K562 (cell line): ENCODE measurements at regions of chr17 and their contacts with region 1.

Region 1: DNA sequence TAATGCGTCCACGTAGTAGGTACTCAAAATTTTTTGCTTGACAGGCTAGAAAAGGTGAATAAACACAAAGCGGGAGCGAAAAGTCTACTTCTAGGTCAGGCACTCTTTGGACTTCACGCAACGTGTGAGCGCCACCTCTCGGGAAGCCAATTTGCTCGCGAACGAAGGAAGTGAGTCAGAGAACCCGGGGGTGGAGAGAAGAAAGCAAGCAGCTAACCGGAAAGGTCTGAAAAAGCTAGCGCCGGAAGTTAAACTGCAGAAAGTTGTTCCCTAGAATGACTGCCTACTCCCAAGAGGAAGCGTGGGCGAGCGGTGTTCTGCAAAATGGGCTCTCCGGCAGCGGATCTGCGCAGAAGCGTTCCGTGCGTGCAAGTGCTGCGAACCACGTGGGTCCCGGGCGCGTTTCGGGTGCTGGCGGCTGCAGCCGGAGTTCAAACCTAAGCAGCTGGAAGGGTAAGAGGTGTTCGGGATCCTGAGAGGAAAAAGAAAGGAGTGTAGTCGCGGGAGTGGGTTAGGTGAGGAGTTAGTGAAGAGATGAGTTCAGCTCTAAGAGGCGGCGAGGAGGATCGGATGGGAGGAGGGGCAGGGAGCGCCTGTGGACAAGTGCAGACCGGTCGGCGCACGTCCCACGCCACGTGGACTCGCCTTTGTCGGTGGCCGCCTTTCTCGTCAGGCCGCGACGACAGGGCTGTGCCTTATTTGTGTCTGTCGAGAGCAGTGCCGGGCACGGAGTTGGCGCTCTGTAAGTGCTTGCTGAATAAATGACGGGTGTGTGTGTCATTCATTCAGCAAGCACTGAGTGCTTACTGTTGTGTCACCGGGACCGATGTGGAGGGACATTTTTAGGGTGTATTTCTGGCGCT is at the start of gene NME1:
- DNase-seq: peak; percentile 92 to 99 (median 93)
- ATAC-seq: peak; percentile 95
- H3K4me3 ChIP-seq: peak within 1 kb of the TSS; percentile 71
- H3K27ac ChIP-seq: peak within 1 kb of the TSS; percentile 87
- H3K4me1 ChIP-seq: peaks cover 5 to 15% of the 10 kb centered on the region in 2 experiments; a peak in 4 of 5 replicates
- H3K27me3 ChIP-seq: no peaks in the 10 kb centered on the region
- CTCF ChIP-seq: peak; percentile 89 to 99 (median 96)
- EP300 ChIP-seq: peak; percentile 79
- POLR2A ChIP-seq: peak; percentile 96
- RAD21 ChIP-seq: peak; percentile 95 to 98
- polyA plus RNA-seq, gene NME1: 1,450 to 1,588 TPM

Region 2: DNA sequence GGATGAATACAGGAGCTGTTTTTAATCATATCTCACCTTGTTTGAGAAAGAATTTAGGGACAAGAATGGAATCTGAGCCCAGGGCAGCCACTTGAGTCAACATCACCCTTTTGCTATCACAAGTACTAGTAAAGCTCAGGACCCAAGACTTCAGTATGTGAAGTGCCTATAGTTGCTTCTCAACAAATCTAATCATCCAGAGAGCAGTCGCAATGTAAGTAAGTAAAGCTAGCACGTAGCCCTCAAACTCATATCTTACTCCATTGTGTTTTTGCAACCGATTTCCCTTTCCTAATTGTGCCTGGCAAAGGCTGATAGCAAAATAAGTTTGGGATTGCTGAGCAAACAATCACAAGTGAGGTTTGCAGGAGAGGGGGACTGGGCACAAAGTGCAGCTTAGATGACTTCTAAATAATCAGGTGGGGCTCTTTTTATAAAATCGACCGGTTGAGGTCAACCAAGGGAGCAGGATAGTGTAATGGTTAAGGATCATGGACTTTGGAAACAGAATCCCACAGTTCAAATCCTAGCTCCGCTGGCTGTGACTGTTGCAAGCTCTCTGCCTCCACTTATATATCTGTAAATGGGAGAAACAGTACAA is 300.3 kb before region 1 on chr17:
- CTCF ChIA-PET with region 1: no interaction called
- POLR2A ChIA-PET with region 1: no interaction called
- in situ Hi-C with region 1: no loop called
- intact Hi-C with region 1: loop called (anchors 5 kb)
- DNase-seq: no peak
- ATAC-seq: no peak
- H3K4me3 ChIP-seq: no peak overlapping the region
- H3K27ac ChIP-seq: no peak overlapping the region
- H3K4me1 ChIP-seq: peaks cover 3 to 16% of the 10 kb centered on the region in 2 experiments; a peak in 3 of 5 replicates
- H3K27me3 ChIP-seq: no peaks in the 10 kb centered on the region
- CTCF ChIP-seq: no peak
- EP300 ChIP-seq: no peak
- POLR2A ChIP-seq: no peak
- RAD21 ChIP-seq: no peak

Region 3: DNA sequence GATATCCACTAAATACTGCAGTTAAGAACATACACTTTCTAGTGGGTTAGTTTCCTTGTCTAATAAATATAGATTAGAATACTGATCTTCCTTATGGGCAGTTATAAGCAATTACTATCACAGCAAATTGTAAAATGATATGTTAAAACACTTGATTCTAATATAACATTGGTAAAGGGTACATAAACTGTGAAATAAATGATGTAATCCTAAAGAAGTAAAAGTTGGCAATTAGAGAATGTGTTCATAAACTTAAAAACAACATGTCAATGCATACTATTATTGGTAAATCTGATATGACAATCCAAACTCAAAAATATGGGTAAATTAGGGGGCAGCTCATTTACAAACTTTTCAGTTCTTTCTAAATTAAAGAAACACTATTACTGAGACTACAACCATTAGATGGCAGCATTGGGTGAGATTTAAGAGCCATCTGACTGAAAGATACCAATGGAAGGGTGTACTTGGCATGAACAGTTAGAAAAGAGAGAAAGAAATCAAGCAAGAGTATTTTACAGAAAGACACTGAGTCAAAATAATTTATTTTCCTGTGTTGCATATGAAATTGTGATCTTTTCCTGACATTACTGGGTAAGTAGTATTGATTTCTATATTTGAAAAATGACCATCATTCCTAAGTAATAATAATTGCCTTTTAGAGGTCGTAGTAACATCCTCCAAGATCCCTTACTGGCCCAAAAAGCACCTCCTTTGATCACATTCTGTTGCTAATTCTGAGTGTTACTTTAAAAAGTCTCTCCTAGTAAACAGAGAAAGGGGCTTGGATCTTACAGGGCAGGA is 152.4 kb before region 1 on chr17:
- CTCF ChIA-PET with region 1: interaction called, 31 read pairs
- POLR2A ChIA-PET with region 1: interaction called, 6 read pairs
- in situ Hi-C with region 1: loop called (anchors 5 kb)
- intact Hi-C with region 1: loop called (anchors 1 kb)
- DNase-seq: peak in 2 of 4 experiments; percentile 23 to 59
- ATAC-seq: peak; percentile 83
- H3K4me3 ChIP-seq: no peak overlapping the region
- H3K27ac ChIP-seq: no peak overlapping the region
- H3K4me1 ChIP-seq: no peaks in the 10 kb centered on the region
- H3K27me3 ChIP-seq: no peaks in the 10 kb centered on the region
- CTCF ChIP-seq: peak in 2 of 3 experiments; percentile 11 to 63; a peak in 3 of 6 replicates
- EP300 ChIP-seq: no peak
- POLR2A ChIP-seq: no peak
- RAD21 ChIP-seq: peak; percentile 72 to 78

Region 4: DNA sequence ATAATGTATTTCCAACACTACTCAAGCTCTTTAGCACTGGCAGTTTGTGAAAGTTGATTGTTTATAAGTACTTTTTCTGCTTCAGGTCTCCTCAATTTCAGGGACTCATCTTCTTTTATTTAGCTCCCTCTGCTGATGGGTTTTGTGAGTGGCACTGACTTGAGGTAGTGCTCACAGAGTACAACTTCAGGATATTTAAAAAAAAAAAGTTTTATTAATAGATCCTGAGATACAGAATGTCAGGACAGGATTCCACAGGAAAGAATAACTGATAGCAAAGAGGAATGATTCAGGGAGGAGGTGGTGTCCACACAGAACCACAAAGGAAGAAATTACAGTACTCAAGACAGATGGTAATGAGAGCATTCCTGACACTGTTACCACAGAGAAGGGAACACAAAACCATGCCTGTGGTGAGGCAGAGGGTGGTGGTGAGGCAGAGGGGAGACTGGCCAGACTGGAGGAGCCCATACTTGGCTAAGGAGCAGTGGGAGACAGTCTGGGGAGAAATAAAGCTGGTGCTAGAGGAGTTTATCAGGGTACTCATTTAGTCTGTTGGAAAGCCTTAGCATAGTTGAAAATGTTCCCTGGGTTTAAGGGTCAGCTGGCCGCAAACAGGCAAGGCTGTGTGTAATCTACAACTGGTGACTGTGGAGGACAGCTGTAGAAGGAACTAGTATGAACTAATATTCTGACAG is 96.5 kb before region 1 on chr17:
- CTCF ChIA-PET with region 1: interaction called, 3 read pairs
- POLR2A ChIA-PET with region 1: interaction called, 3 read pairs
- in situ Hi-C with region 1: no loop called
- intact Hi-C with region 1: loop called (anchors 5 kb)
- DNase-seq: peak; percentile 19 to 55 (median 29)
- ATAC-seq: peak; percentile 86
- H3K4me3 ChIP-seq: no peak overlapping the region
- H3K27ac ChIP-seq: peak overlapping the region; percentile 58; the same call in 2 of the 3 replicates
- H3K4me1 ChIP-seq: no peaks in the 10 kb centered on the region; a peak in 2 of 5 replicates
- H3K27me3 ChIP-seq: no peaks in the 10 kb centered on the region
- CTCF ChIP-seq: peak; percentile 15 to 64 (median 43); a peak in 3 of 6 replicates
- EP300 ChIP-seq: no peak
- POLR2A ChIP-seq: no peak
- RAD21 ChIP-seq: peak; percentile 29 to 49; a peak in 2 of 4 replicates

Region 5: GRCh38 chr17:51079049-51079448 is 74.4 kb before region 1 on chr17:
- CTCF ChIA-PET with region 1: no interaction called
- POLR2A ChIA-PET with region 1: no interaction called
- in situ Hi-C with region 1: no loop called
- intact Hi-C with region 1: no loop called
- DNase-seq: no peak
- ATAC-seq: no peak
- H3K4me3 ChIP-seq: no peak overlapping the region
- H3K27ac ChIP-seq: no peak overlapping the region
- H3K4me1 ChIP-seq: no peaks in the 10 kb centered on the region
- H3K27me3 ChIP-seq: no peaks in the 10 kb centered on the region
- CTCF ChIP-seq: no peak
- EP300 ChIP-seq: no peak
- POLR2A ChIP-seq: no peak
- RAD21 ChIP-seq: no peak

Region 6: GRCh38 chr17:51097708-51098446 is 55.6 kb before region 1 on chr17:
- CTCF ChIA-PET with region 1: no interaction called
- POLR2A ChIA-PET with region 1: no interaction called
- in situ Hi-C with region 1: no loop called
- intact Hi-C with region 1: no loop called
- DNase-seq: no peak
- ATAC-seq: peak; percentile 36; the same call in 2 of the 3 replicates
- H3K4me3 ChIP-seq: no peak overlapping the region
- H3K27ac ChIP-seq: no peak overlapping the region
- H3K4me1 ChIP-seq: no peaks in the 10 kb centered on the region; a peak in 2 of 5 replicates
- H3K27me3 ChIP-seq: no peaks in the 10 kb centered on the region
- CTCF ChIP-seq: no peak
- EP300 ChIP-seq: no peak
- POLR2A ChIP-seq: no peak
- RAD21 ChIP-seq: no peak

Region 7: GRCh38 chr17:51120739-51121617 is 32.5 kb before region 1 on chr17 and contains the start of gene SPAG9:
- CTCF ChIA-PET with region 1: interaction called, 14 read pairs
- POLR2A ChIA-PET with region 1: interaction called, 6 read pairs
- in situ Hi-C with region 1: no loop called
- intact Hi-C with region 1: loop called (anchors 1 kb)
- DNase-seq: peak; percentile 95 to 97 (median 96)
- ATAC-seq: peak; percentile 73
- H3K4me3 ChIP-seq: peak within 1 kb of the TSS; percentile 97
- H3K27ac ChIP-seq: peak within 1 kb of the TSS; percentile 97
- H3K4me1 ChIP-seq: peaks cover 12 to 25% of the 10 kb centered on the region in 2 experiments
- H3K27me3 ChIP-seq: no peaks in the 10 kb centered on the region
- CTCF ChIP-seq: no peak
- EP300 ChIP-seq: no peak
- POLR2A ChIP-seq: peak; percentile 21; the same call in 1 of the 2 replicates
- RAD21 ChIP-seq: no peak; a peak in 1 of 4 replicates
- polyA plus RNA-seq, gene SPAG9: 12.2 to 15.2 TPM

Region 8: DNA sequence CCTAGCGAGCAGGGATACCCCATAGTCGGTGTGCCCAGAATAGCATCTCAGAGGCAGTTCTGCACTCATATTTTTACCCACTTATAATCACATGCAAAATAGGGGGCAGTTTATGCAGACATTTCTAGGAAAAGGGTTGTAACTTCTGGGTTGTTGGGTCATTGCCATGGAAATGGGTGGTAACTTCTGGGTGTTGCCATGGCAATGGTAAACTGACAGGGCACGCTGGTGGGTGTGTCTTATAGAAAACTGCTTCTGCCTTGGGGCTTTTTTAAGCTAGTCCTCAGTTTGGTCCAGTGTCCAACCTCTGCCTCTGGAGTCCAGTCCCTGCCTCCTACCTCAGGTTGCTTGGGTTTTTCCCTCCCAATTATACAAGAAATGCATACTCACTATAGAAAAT is 25.4 kb before region 1 on chr17:
- CTCF ChIA-PET with region 1: no interaction called
- POLR2A ChIA-PET with region 1: interaction called, 10 read pairs
- in situ Hi-C with region 1: no loop called
- intact Hi-C with region 1: no loop called
- DNase-seq: peak in 2 of 4 experiments; percentile 34 to 84
- ATAC-seq: peak; percentile 82
- H3K4me3 ChIP-seq: no peak overlapping the region
- H3K27ac ChIP-seq: peak overlapping the region; percentile 36; the same call in 1 of the 3 replicates
- H3K4me1 ChIP-seq: peaks cover 4 to 13% of the 10 kb centered on the region in 2 experiments; a peak in 4 of 5 replicates
- H3K27me3 ChIP-seq: no peaks in the 10 kb centered on the region
- CTCF ChIP-seq: no peak
- EP300 ChIP-seq: 0 out of 2 replicates have a peak, but pooled peaks have one; percentile 9
- POLR2A ChIP-seq: no peak
- RAD21 ChIP-seq: no peak

Region 9: GRCh38 chr17:51166197-51166986 is 13.0 kb after region 1 on chr17 and contains the start of gene NME2:
- CTCF ChIA-PET with region 1: interaction called, 7 read pairs
- POLR2A ChIA-PET with region 1: interaction called, 23 read pairs
- in situ Hi-C with region 1: no loop called
- intact Hi-C with region 1: no loop called
- DNase-seq: peak; percentile 95 to 96 (median 96)
- ATAC-seq: peak; percentile 96
- H3K4me3 ChIP-seq: peak within 1 kb of the TSS; percentile 94
- H3K27ac ChIP-seq: peak within 1 kb of the TSS; percentile 92
- H3K4me1 ChIP-seq: peaks cover 6 to 33% of the 10 kb centered on the region in 2 experiments; a peak in 4 of 5 replicates
- H3K27me3 ChIP-seq: no peaks in the 10 kb centered on the region
- CTCF ChIP-seq: 0 out of 6 replicates have a peak, but pooled peaks of 1 of the 3 experiments have one; percentile 17
- EP300 ChIP-seq: no peak
- POLR2A ChIP-seq: peak; percentile 85
- RAD21 ChIP-seq: no peak; a peak in 1 of 4 replicates
- polyA plus RNA-seq, gene NME2: 684 to 924 TPM